ENCODE measurements at regions of chr7 and their contacts with region 1.

Region 1: GRCh38 chr7:131471605-131472004 is 84.8 kb downstream of the PODXL start:
- DNase-seq: no peak
- ATAC-seq: no peak
- H3K4me3 ChIP-seq: no peak overlapping the region
- H3K4me3 Mint-ChIP-seq: no peak overlapping the region
- H3K27ac ChIP-seq: no peak overlapping the region
- H3K27ac Mint-ChIP-seq: no peak overlapping the region
- H3K4me1 ChIP-seq: no peaks in the 10 kb centered on the region
- H3K4me1 Mint-ChIP-seq: no peaks in the 10 kb centered on the region
- H3K27me3 ChIP-seq: no peaks in the 10 kb centered on the region
- H3K27me3 Mint-ChIP-seq: no peaks in the 10 kb centered on the region

Region 2: GRCh38 chr7:131424219-131424822 is 47.3 kb before region 1 on chr7:
- CTCF ChIA-PET with region 1: no interaction called
- POLR2A ChIA-PET with region 1: no interaction called
- DNase-seq: peak in 6 of 35 experiments; percentile 1 to 63 (median 4)
- ATAC-seq: peak; percentile 61 to 81 (median 78)
- H3K4me3 ChIP-seq: no peak overlapping the region
- H3K4me3 Mint-ChIP-seq: no peak overlapping the region
- H3K27ac ChIP-seq: no peak overlapping the region
- H3K27ac Mint-ChIP-seq: no peak overlapping the region
- H3K4me1 ChIP-seq: no peaks in the 10 kb centered on the region
- H3K4me1 Mint-ChIP-seq: peaks cover 0 to 14% (median 7%) of the 10 kb centered on the region in 3 donors
- H3K27me3 ChIP-seq: no peaks in the 10 kb centered on the region
- H3K27me3 Mint-ChIP-seq: no peaks in the 10 kb centered on the region

Region 3: DNA sequence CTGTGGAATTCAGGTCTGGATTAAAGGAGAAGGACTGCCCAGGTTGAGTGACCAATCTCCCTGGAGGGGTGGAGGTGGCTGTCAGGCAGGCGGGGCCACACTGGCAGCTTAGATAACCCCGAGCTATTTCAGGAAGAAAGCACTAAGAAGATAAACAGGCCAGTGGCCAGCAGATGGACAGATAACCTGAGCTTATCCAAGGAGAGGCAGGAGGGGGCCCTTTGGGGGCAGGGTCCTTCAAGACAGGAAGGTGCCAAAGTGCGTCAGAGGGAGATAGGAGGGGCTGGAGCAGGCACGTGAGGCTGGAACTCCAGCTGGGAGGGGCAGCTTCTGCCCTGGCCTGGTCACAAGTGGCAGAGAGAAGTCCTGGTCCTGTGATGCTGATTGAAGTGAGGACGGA is 114.6 kb after region 1 on chr7:
- CTCF ChIA-PET with region 1: no interaction called
- POLR2A ChIA-PET with region 1: no interaction called
- DNase-seq: no peak
- ATAC-seq: no peak
- H3K4me3 ChIP-seq: no peak overlapping the region
- H3K4me3 Mint-ChIP-seq: no peak overlapping the region
- H3K27ac ChIP-seq: no peak overlapping the region
- H3K27ac Mint-ChIP-seq: no peak overlapping the region
- H3K4me1 ChIP-seq: no peaks in the 10 kb centered on the region
- H3K4me1 Mint-ChIP-seq: no peaks in the 10 kb centered on the region
- H3K27me3 ChIP-seq: peaks cover 0 to 15% of the 10 kb centered on the region in 2 experiments
- H3K27me3 Mint-ChIP-seq: peaks cover 0 to 10% of the 10 kb centered on the region in 2 donors

Region 4: GRCh38 chr7:133290041-133290440 is 1818.4 kb after region 1 on chr7:
- CTCF ChIA-PET with region 1: no interaction called
- POLR2A ChIA-PET with region 1: interaction called in 1 of 2 experiments, 12 read pairs
- DNase-seq: no peak
- ATAC-seq: no peak
- H3K4me3 ChIP-seq: no peak overlapping the region
- H3K4me3 Mint-ChIP-seq: no peak overlapping the region
- H3K27ac ChIP-seq: no peak overlapping the region
- H3K27ac Mint-ChIP-seq: no peak overlapping the region
- H3K4me1 ChIP-seq: no peaks in the 10 kb centered on the region
- H3K4me1 Mint-ChIP-seq: peaks cover 12 to 23% (median 21%) of the 10 kb centered on the region in 3 donors
- H3K27me3 ChIP-seq: no peaks in the 10 kb centered on the region
- H3K27me3 Mint-ChIP-seq: no peaks in the 10 kb centered on the region

Measured in T-cell (primary cell).